ENCODE measurements at regions of chr21 and their contacts with region 1.

Region 1: GRCh38 chr21:39388038-39388810 is 39.3 kb upstream of the HMGN1 start:
- DNase-seq: peak; percentile 94
- ATAC-seq: peak; percentile 82 to 87

Region 2: DNA sequence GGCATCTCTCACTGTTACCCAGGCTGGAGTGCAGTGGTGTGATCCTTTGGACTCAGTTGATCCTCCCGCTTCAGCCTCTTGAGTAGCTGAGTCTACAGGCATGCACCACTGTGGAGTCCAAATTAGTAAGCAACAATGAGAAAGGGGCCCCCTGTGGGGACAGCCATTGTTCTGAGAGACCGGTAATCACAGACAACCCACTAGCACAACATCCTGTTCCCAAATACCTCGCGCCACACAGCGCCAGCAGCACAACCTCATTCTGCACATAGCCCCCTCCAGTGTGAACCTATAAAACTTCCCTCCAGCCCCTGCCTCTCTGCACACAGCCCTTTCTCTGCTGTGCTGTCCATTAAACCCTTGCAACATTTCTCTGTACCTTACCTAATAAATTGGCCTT is 1795.2 kb before region 1 on chr21:
- intact Hi-C with region 1: no loop called
- DNase-seq: no peak
- ATAC-seq: peak; percentile 49 to 63

Region 3: DNA sequence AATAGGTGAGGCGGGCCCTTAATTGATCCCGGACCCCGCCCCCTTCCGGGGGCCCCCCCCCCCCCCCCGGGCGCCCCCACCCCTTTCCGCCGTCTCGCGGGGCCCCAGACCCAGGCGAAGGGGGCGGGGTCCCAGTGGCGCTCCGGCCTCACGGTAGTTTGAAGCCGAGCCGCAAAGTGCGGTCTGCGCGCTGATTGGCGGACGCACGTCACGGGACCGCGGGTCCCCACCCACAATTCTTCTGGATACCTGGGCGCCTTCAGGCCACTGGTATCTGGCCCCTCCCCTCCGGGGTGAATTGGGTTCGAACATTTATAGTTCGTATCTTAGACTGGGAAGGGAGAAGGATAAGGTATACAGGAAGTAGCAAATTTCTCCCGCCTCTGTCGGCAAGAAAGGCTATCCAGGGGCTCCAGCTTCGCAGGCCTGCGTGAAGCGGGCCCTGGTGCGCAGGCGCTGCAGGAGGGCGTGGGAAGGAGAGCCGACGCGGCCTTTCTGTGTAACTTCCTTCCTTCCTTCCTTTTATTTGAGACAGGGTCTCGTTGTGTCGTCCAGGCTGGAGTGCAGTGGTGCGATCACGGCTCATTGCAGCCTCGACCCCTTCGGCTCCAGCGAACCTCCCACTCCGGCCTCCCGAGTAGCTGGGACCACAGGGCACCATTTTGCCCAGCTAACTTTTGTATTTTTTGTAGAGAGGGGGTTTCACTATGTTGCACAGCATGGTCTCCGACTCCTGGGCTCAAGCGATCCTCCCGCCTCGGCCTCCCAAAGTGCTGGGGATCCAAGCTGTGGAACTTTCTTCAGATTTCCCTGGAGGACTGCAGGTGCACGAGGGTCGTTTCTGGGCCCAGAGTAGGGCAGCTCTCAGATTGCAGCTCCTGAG is 38.8 kb before region 1 on chr21:
- intact Hi-C with region 1: loop called in 1 of 2 experiments (anchors 5 kb)
- DNase-seq: peak; percentile 97
- ATAC-seq: peak; percentile 96 to 97

Region 4: DNA sequence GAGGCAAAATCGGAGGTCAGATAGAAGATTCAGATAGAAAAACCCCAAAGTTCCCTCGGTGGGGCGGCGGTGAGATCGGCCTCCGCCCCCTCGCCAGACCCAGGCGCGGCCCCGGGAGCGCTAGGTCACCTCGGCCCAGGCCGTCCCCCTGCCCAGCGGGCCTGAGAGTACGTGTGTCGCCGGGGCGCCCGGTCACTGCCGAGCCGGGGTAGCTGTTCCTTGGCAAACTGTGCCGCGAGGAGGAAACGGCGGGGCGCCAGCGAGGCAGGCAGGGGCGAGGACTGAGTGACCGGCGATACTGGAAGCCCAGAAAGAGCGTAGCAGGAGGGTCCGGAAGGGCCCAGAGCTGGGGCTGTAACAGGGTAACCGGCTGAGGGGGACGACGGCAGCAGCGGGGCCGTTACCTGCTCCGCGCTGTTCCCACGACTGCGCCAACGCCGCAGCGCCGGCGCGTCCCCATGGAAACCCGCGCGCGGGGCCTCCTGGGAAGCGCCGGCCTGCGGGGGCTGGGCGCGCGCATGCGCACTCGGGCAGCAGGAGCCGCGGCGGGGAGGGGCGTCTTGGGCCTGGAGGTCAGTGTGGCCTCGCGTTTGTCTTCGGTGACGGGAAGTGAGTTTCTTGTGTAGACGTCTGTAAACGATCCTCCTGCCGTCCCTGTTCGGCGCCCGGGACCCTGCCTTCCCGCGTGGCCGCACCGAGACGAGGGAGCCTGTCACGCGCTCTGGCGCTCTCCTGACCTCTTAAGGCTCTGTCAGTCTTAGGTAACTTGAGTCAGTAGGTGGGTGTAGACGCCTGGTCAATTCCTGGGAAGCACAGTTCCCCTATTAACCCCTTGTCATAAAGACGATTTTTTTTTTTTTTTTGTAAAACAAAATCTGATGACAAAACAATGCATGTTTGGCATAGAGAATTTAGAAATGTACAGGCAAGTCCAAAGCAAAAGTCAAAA is 57.4 kb after region 1 on chr21 and contains the start of gene LCA5L:
- intact Hi-C with region 1: loop called in 1 of 2 experiments (anchors 5 kb)
- DNase-seq: peak; percentile 92
- ATAC-seq: peak; percentile 94 to 95
- total RNA-seq, gene LCA5L: 0.82 to 0.84 TPM